SK-N-SH (cell line): ENCODE measurements at regions of chr12 and their contacts with region 1.

Region 1: GRCh38 chr12:108803428-108804105 is 53.8 kb downstream of the SSH1 start:
- DNase-seq: peak; percentile 86
- H3K4me3 ChIP-seq: peak overlapping the region in 1 of 2 experiments; percentile 36; a peak in 1 of 4 replicates
- H3K27ac ChIP-seq: peak overlapping the region; percentile 80 to 97
- H3K4me1 ChIP-seq: peaks cover 18 to 41% of the 10 kb centered on the region in 2 experiments
- H3K27me3 ChIP-seq: no peaks in the 10 kb centered on the region
- CTCF ChIP-seq: peak; percentile 92
- EP300 ChIP-seq: peak; percentile 24 to 34; a peak in 1 of 4 replicates
- RAD21 ChIP-seq: peak; percentile 98

Region 2: GRCh38 chr12:108570743-108571608 is 232.6 kb before region 1 on chr12:
- CTCF ChIA-PET with region 1: interaction called, 11 read pairs
- POLR2A ChIA-PET with region 1: interaction called, 3 read pairs
- DNase-seq: no peak
- H3K4me3 ChIP-seq: no peak overlapping the region
- H3K27ac ChIP-seq: no peak overlapping the region
- H3K4me1 ChIP-seq: peaks cover 11% of the 10 kb centered on the region in 2 experiments; a peak in 2 of 4 replicates
- H3K27me3 ChIP-seq: no peaks in the 10 kb centered on the region
- CTCF ChIP-seq: peak; percentile 61
- EP300 ChIP-seq: no peak
- RAD21 ChIP-seq: peak; percentile 87

Region 3: GRCh38 chr12:108649669-108650068 is 153.9 kb before region 1 on chr12:
- CTCF ChIA-PET with region 1: interaction called, 15 read pairs
- POLR2A ChIA-PET with region 1: no interaction called
- DNase-seq: no peak
- H3K4me3 ChIP-seq: no peak overlapping the region
- H3K27ac ChIP-seq: peak overlapping the region; percentile 82 to 87
- H3K4me1 ChIP-seq: peaks cover 4 to 37% of the 10 kb centered on the region in 2 experiments; a peak in 3 of 4 replicates
- H3K27me3 ChIP-seq: no peaks in the 10 kb centered on the region
- CTCF ChIP-seq: no peak
- EP300 ChIP-seq: peak; percentile 44 to 95
- RAD21 ChIP-seq: no peak

Region 4: DNA sequence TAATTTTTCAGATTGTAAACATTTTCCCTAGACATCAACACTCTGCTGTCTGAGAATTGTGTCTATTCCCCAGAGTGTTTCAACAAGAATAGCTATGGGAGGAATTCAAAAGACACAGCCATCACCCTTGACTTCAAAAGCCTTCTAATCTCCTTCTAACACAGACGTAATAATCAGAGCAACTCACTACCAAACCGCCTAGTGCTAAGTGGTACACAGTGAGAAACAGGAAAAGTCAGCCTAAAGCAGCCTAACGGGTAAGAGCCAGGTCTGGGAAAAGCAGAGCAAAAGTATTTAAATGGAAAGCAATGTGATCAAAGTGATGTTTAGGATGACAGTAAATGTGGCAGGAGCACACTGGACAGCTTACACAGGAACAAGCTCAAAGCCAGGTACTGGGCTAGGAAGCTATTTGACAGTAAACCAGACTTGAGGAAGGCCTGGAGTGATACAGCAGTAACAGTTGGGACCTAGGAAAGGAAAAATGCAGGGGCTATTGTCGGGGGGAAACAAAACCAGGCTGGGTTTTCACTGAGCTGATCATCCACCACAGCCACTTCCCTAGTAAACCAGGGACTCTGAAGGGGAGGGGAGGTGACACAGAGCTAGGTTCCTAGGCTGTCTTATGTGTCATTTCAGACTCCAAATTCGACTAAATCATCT is 101.7 kb before region 1 on chr12:
- CTCF ChIA-PET with region 1: interaction called, 11 read pairs
- POLR2A ChIA-PET with region 1: no interaction called
- DNase-seq: no peak
- H3K4me3 ChIP-seq: no peak overlapping the region
- H3K27ac ChIP-seq: peak overlapping the region; percentile 35 to 90
- H3K4me1 ChIP-seq: peaks cover 38 to 50% of the 10 kb centered on the region in 2 experiments; a peak in 3 of 4 replicates
- H3K27me3 ChIP-seq: no peaks in the 10 kb centered on the region
- CTCF ChIP-seq: no peak
- EP300 ChIP-seq: no peak
- RAD21 ChIP-seq: no peak

Region 5: GRCh38 chr12:108826101-108826806 is 22.7 kb after region 1 on chr12:
- CTCF ChIA-PET with region 1: interaction called, 26 read pairs
- POLR2A ChIA-PET with region 1: no interaction called
- DNase-seq: peak; percentile 79
- H3K4me3 ChIP-seq: peak overlapping the region; percentile 1 to 37; a peak in 3 of 4 replicates
- H3K27ac ChIP-seq: peak overlapping the region; percentile 99 to 100
- H3K4me1 ChIP-seq: peaks cover 54 to 74% of the 10 kb centered on the region in 2 experiments
- H3K27me3 ChIP-seq: no peaks in the 10 kb centered on the region
- CTCF ChIP-seq: no peak; the same call in 1 of the 2 replicates
- EP300 ChIP-seq: peak; percentile 10 to 68; a peak in 3 of 4 replicates
- RAD21 ChIP-seq: no peak; the same call in 1 of the 2 replicates

Region 6: GRCh38 chr12:108884116-108885012 is 80.8 kb after region 1 on chr12:
- CTCF ChIA-PET with region 1: interaction called, 10 read pairs
- POLR2A ChIA-PET with region 1: no interaction called
- DNase-seq: peak; percentile 58
- H3K4me3 ChIP-seq: no peak overlapping the region
- H3K27ac ChIP-seq: no peak overlapping the region
- H3K4me1 ChIP-seq: peaks cover 0 to 3% of the 10 kb centered on the region in 2 experiments; a peak in 1 of 4 replicates
- H3K27me3 ChIP-seq: no peaks in the 10 kb centered on the region
- CTCF ChIP-seq: peak; percentile 58
- EP300 ChIP-seq: no peak
- RAD21 ChIP-seq: peak; percentile 42